PC-3 (cell line): ENCODE measurements at regions of chr5 and their contacts with region 1.

Region 1: GRCh38 chr5:10863763-10864383 is 102.8 kb upstream of the DAP start:
- DNase-seq: peak; percentile 88
- ATAC-seq: peak; percentile 46
- H3K4me3 ChIP-seq: no peak overlapping the region
- H3K27ac ChIP-seq: no peak overlapping the region
- H3K4me1 ChIP-seq: peaks cover 23% of the 10 kb centered on the region
- H3K27me3 ChIP-seq: no peaks in the 10 kb centered on the region
- CTCF ChIP-seq: peak; percentile 100

Region 2: GRCh38 chr5:10775646-10776045 is 88.2 kb before region 1 on chr5:
- CTCF ChIA-PET with region 1: no interaction called
- POLR2A ChIA-PET with region 1: no interaction called
- intact Hi-C with region 1: no loop called
- DNase-seq: no peak
- ATAC-seq: no peak
- H3K4me3 ChIP-seq: no peak overlapping the region
- H3K27ac ChIP-seq: no peak overlapping the region
- H3K4me1 ChIP-seq: no peaks in the 10 kb centered on the region
- H3K27me3 ChIP-seq: no peaks in the 10 kb centered on the region
- CTCF ChIP-seq: peak; percentile 43

Region 3: DNA sequence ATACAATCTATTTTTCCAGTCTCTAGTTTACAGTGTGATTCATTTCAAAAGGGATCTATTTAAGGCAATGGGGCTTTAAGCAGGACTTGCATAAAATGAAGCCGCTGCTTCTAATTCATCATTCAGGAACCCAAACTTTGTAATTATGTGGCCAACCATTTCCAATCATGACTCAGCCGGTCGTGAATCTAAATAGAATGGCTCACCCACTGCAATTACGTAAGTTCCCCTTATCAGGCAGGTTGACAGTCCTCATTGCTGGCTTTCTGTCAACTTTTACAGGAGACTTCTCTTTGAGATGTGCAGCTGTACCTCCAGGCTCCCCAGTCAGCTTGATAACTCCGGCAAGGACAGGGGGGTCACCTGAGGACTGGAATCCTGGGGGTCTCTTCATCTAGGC is 50.0 kb after region 1 on chr5:
- CTCF ChIA-PET with region 1: no interaction called
- POLR2A ChIA-PET with region 1: no interaction called
- intact Hi-C with region 1: loop called (anchors 2 kb)
- DNase-seq: peak; percentile 100
- ATAC-seq: peak; percentile 85
- H3K4me3 ChIP-seq: peak overlapping the region; percentile 37
- H3K27ac ChIP-seq: peak overlapping the region; percentile 80
- H3K4me1 ChIP-seq: peaks cover 34% of the 10 kb centered on the region
- H3K27me3 ChIP-seq: no peaks in the 10 kb centered on the region
- CTCF ChIP-seq: no peak

Region 4: GRCh38 chr5:10934783-10935355 is 71.0 kb after region 1 on chr5:
- CTCF ChIA-PET with region 1: no interaction called
- POLR2A ChIA-PET with region 1: no interaction called
- intact Hi-C with region 1: no loop called
- DNase-seq: no peak
- ATAC-seq: no peak
- H3K4me3 ChIP-seq: no peak overlapping the region
- H3K27ac ChIP-seq: no peak overlapping the region
- H3K4me1 ChIP-seq: no peaks in the 10 kb centered on the region
- H3K27me3 ChIP-seq: no peaks in the 10 kb centered on the region
- CTCF ChIP-seq: no peak

Region 5: GRCh38 chr5:11046160-11046559 is 182.3 kb after region 1 on chr5:
- CTCF ChIA-PET with region 1: no interaction called
- POLR2A ChIA-PET with region 1: no interaction called
- intact Hi-C with region 1: loop called (anchors 5 kb)
- DNase-seq: peak; percentile 30
- ATAC-seq: peak; percentile 58; the same call in 1 of the 2 replicates
- H3K4me3 ChIP-seq: no peak overlapping the region
- H3K27ac ChIP-seq: no peak overlapping the region
- H3K4me1 ChIP-seq: peaks cover 24% of the 10 kb centered on the region
- H3K27me3 ChIP-seq: no peaks in the 10 kb centered on the region
- CTCF ChIP-seq: 0 out of 2 replicates have a peak, but pooled peaks have one; percentile 28

Region 6: DNA sequence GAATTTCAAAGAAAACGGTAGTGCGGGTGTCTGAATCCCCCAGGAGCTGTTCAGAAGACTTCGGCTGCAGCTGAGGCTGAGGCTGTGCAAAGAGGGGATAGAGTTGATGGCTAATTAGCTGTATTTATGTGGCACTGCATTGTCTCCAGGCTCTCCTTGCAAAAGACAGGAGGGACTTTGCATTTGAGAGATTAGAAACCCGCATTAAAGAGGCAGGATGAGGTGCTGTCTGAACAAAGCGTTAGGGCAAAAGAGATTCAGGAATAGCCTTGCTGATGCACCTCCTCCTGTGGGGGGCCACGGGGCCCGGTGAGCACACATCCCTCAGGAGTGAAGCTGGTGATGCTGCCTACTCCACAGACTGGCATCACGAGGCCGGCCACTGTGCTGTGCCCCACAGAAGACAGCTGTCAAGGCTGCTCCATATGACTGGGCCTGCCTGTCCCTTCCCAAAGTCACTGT is 240.8 kb after region 1 on chr5:
- CTCF ChIA-PET with region 1: no interaction called
- POLR2A ChIA-PET with region 1: no interaction called
- intact Hi-C with region 1: loop called (anchors 5 kb)
- DNase-seq: no peak
- ATAC-seq: no peak
- H3K4me3 ChIP-seq: no peak overlapping the region
- H3K27ac ChIP-seq: no peak overlapping the region
- H3K4me1 ChIP-seq: no peaks in the 10 kb centered on the region
- H3K27me3 ChIP-seq: peaks cover 7% of the 10 kb centered on the region; the same call in 1 of the 2 replicates
- CTCF ChIP-seq: no peak

Region 7: DNA sequence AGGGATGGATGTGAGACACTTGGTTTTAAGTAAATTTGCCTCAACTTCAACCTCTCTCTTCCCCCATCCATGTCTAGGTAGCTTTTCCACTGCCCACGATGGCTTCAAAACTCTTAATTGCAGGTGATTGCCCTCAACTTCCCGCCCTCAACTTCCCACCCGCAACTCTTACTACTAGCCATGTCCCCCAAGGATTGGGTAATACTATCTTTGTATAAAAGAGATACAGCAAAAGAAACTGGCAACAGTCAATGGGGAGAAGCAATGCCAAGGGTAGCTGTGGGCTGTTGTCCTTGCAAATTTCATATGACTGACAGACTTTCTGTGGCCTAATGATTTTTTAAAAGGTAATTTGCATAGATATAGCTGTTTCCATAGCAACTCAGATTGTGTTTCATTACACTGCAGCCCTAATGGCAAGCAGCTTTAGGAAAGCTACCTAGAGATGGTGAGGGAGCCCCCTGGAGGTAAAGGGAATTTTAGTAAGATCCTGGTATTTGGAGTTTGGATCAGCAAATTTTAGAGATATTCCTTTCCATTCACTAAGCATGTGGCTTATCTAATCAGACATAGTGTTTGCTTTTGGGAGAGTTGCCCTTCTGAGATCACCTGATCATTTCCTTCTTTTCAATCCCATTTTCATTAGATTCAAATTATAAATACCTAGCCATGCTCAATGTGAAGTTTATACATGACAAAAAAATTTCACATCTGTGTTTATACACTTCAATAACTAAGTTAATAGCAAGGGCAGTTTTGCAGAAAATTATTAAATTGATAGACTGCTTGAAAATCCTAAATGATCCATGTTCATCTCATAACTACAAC is 318.8 kb after region 1 on chr5:
- CTCF ChIA-PET with region 1: no interaction called
- POLR2A ChIA-PET with region 1: no interaction called
- intact Hi-C with region 1: loop called (anchors 1 kb)
- DNase-seq: peak; percentile 80
- ATAC-seq: peak; percentile 69
- H3K4me3 ChIP-seq: no peak overlapping the region
- H3K27ac ChIP-seq: no peak overlapping the region
- H3K4me1 ChIP-seq: no peaks in the 10 kb centered on the region
- H3K27me3 ChIP-seq: no peaks in the 10 kb centered on the region
- CTCF ChIP-seq: peak; percentile 97